ENCODE measurements at regions of chr16 and their contacts with region 1.

Region 1: DNA sequence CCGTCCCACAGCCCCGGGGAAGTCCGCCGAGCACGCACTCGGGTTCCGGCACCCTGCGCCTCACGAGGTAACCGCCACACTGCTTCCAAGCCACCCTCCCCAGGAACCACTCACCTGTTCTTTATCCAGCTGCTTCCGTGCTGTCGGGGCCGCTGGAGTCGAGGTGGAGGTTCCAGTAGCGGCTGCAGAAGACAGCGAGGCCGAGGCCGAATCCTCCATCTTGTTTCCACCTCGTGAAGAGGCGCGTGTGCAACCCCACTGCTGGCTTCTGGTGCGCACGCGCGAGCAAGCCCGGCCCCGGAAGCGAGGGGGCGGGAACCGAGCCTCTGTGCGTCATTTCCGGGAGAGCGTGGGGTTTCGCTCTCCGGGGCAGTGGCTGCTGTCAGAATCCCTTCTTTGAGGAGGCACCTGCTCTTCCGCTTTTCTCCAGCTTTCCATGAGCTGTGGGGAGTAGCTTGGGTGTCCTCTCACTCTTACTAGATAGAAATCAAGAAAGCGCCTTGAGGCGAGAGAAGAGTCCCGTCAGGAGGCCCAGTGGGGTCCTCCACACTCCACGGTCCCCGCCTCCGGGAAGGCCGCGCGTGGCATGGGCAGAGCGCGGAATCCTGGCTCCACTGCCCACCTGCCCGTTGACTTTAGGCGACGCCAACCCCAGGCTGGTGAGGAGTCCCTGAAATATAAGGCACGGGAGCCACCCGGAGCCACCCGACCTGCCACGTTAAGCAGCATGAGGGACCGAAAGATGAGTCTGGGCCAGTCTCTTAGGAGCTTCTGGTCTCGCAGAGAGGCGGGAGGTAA is at the start of gene RSL1D1:
- DNase-seq: peak; percentile 98
- ATAC-seq: peak; percentile 88
- H3K4me3 ChIP-seq: peak within 1 kb of the TSS; percentile 73 to 97 (median 91)
- H3K4me3 Mint-ChIP-seq: peak within 1 kb of the TSS; percentile 97
- H3K27ac ChIP-seq: peak within 1 kb of the TSS; percentile 81 to 94
- H3K27ac Mint-ChIP-seq: peak within 1 kb of the TSS; percentile 97
- H3K4me1 ChIP-seq: peaks cover 18 to 27% of the 10 kb centered on the region in 2 donors
- H3K4me1 Mint-ChIP-seq: peaks cover 40% of the 10 kb centered on the region
- H3K27me3 ChIP-seq: no peaks in the 10 kb centered on the region
- H3K27me3 Mint-ChIP-seq: no peaks in the 10 kb centered on the region
- CTCF ChIP-seq: no peak
- total RNA-seq, gene RSL1D1: 146 and 167 TPM in 2 replicates

Region 2: GRCh38 chr16:10944249-10945064 is 907.0 kb before region 1 on chr16 and contains the start of gene CLEC16A:
- CTCF ChIA-PET with region 1: no interaction called
- POLR2A ChIA-PET with region 1: no interaction called
- intact Hi-C with region 1: loop called (anchors 5 kb)
- DNase-seq: peak; percentile 96
- ATAC-seq: peak; percentile 71
- H3K4me3 ChIP-seq: peak within 1 kb of the TSS; percentile 64 to 91 (median 77)
- H3K4me3 Mint-ChIP-seq: peak within 1 kb of the TSS; percentile 90
- H3K27ac ChIP-seq: peak within 1 kb of the TSS; percentile 54 to 83
- H3K27ac Mint-ChIP-seq: peak within 1 kb of the TSS; percentile 81
- H3K4me1 ChIP-seq: peaks cover 69 to 79% of the 10 kb centered on the region in 2 donors
- H3K4me1 Mint-ChIP-seq: peaks cover 78% of the 10 kb centered on the region
- H3K27me3 ChIP-seq: no peaks in the 10 kb centered on the region
- H3K27me3 Mint-ChIP-seq: no peaks in the 10 kb centered on the region
- CTCF ChIP-seq: no peak
- total RNA-seq, gene CLEC16A: 79.5 and 82.3 TPM in 2 replicates

Region 3: GRCh38 chr16:11901091-11901490 is 49.6 kb after region 1 on chr16:
- CTCF ChIA-PET with region 1: no interaction called
- POLR2A ChIA-PET with region 1: no interaction called
- intact Hi-C with region 1: no loop called
- DNase-seq: no peak
- ATAC-seq: no peak
- H3K4me3 ChIP-seq: no peak overlapping the region
- H3K4me3 Mint-ChIP-seq: no peak overlapping the region
- H3K27ac ChIP-seq: no peak overlapping the region
- H3K27ac Mint-ChIP-seq: no peak overlapping the region
- H3K4me1 ChIP-seq: peaks cover 0 to 3% of the 10 kb centered on the region in 2 donors
- H3K4me1 Mint-ChIP-seq: peaks cover 28% of the 10 kb centered on the region
- H3K27me3 ChIP-seq: no peaks in the 10 kb centered on the region
- H3K27me3 Mint-ChIP-seq: no peaks in the 10 kb centered on the region
- CTCF ChIP-seq: no peak

Measured in B cell (primary cell).